Heart left ventricle (tissue), 16 donors: ENCODE measurements at regions of chr18 and their contacts with region 1.

Region 1: DNA sequence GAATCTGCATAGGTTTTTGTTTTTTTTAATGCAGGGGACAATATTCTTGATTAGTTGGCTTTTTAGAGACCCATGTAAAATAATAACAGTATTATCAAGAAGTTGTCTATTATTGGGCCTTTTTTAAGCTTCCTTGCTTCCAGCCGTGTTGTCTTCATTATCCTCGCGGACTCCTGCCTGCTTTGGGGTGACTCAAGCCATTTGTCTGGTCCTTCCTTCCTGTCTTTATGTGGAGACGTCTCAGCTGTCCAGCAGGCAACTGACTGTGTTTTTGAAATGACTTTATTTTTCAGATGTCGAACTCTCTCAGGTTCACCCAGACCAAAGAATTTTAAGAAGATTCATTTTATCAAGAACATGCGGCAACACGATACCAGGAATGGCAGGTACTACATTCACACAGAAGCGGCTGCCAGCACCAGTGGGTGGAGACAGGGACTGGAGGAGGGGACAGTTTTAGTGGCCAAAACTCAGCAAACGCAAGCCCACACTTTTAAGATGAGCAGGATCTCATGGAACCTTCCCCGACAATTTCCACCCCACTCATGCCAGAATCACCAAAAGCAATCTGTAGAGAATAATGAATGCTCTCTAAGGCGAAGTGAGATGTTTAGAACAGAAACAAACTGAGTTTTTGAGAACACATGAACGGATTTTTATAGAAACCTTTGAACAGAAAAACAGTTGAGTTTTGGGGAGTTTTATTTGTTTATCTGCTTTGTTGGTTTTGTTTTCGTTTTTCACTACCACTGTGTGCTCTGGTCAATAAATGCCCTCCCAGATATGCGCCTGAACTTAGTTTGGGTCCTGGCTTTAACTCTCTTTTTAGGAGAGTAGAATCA is 59.1 kb downstream of the CABLES1 start:
- DNase-seq: no peak
- ATAC-seq: peak in 2 of 4 donors; percentile 30 to 76
- H3K4me3 ChIP-seq: peak overlapping the region in 2 of 12 donors; percentile 10 to 12
- H3K27ac ChIP-seq: peak overlapping the region in 10 of 12 donors; percentile 11 to 66 (median 46)
- H3K4me1 ChIP-seq: peaks cover 0 to 33% (median 12%) of the 10 kb centered on the region in 12 donors
- H3K27me3 ChIP-seq: no peaks in the 10 kb centered on the region
- CTCF ChIP-seq: no peak
- POLR2A ChIP-seq: no peak

Region 2: DNA sequence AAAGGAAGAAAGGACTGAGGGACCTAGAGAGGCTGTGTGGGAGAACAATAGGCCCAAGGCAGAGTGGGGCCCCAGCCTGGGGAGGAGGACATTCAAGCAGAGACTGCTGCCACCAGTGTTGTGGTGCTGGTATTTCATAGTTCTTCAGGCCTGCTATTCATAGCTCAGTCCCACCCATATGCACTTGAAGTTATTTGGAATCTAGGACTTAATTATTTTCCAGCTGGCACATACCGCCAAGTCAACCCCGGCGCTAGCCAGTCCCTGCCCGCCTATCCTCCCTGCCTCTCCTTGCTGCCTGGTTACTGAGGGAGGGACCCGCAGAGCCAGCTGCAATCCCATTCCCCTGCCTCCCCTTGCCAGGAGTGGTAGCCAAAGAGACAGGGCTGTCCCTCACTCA is 82.1 kb after region 1 on chr18:
- intact Hi-C with region 1: loop called in 1 of 10 experiments (anchors 10 kb)
- DNase-seq: peak in 4 of 5 donors; percentile 37 to 72 (median 44)
- ATAC-seq: peak; percentile 93 to 95 (median 93)
- H3K4me3 ChIP-seq: no peak overlapping the region
- H3K27ac ChIP-seq: peak overlapping the region in 7 of 12 donors; percentile 18 to 52 (median 35)
- H3K4me1 ChIP-seq: peaks cover 0 to 23% (median 0%) of the 10 kb centered on the region in 12 donors
- H3K27me3 ChIP-seq: no peaks in the 10 kb centered on the region
- CTCF ChIP-seq: peak in 3 of 12 donors; percentile 24 to 30 (median 28)
- POLR2A ChIP-seq: no peak